Activated CD4-positive, alpha-beta T cell treated with anti-CD3 and anti-CD28 coated beads for 36 hours (primary cell): ENCODE measurements at regions of chr1 and their contacts with region 1.

Region 1: GRCh38 chr1:171188388-171189266 is 3.5 kb downstream of the FMO2 start:
- DNase-seq: peak; percentile 64
- ATAC-seq: peak; percentile 69
- H3K4me3 Mint-ChIP-seq: no peak overlapping the region
- H3K27ac Mint-ChIP-seq: no peak overlapping the region
- H3K4me1 Mint-ChIP-seq: no peaks in the 10 kb centered on the region
- H3K27me3 Mint-ChIP-seq: peaks cover 16% of the 10 kb centered on the region

Region 2: GRCh38 chr1:169933984-169934725 is 1254.5 kb before region 1 on chr1:
- CTCF ChIA-PET with region 1: no interaction called
- POLR2A ChIA-PET with region 1: no interaction called
- intact Hi-C with region 1: loop called in 1 of 2 experiments (anchors 2 kb)
- DNase-seq: no peak
- ATAC-seq: no peak
- H3K4me3 Mint-ChIP-seq: no peak overlapping the region
- H3K27ac Mint-ChIP-seq: no peak overlapping the region
- H3K4me1 Mint-ChIP-seq: no peaks in the 10 kb centered on the region
- H3K27me3 Mint-ChIP-seq: no peaks in the 10 kb centered on the region

Region 3: GRCh38 chr1:170967042-170967910 is 221.4 kb before region 1 on chr1:
- CTCF ChIA-PET with region 1: interaction called, 19 read pairs
- POLR2A ChIA-PET with region 1: no interaction called
- intact Hi-C with region 1: loop called in 1 of 2 experiments (anchors 2 kb)
- DNase-seq: peak; percentile 4
- ATAC-seq: no peak
- H3K4me3 Mint-ChIP-seq: no peak overlapping the region
- H3K27ac Mint-ChIP-seq: no peak overlapping the region
- H3K4me1 Mint-ChIP-seq: no peaks in the 10 kb centered on the region
- H3K27me3 Mint-ChIP-seq: peaks cover 22% of the 10 kb centered on the region

Region 4: DNA sequence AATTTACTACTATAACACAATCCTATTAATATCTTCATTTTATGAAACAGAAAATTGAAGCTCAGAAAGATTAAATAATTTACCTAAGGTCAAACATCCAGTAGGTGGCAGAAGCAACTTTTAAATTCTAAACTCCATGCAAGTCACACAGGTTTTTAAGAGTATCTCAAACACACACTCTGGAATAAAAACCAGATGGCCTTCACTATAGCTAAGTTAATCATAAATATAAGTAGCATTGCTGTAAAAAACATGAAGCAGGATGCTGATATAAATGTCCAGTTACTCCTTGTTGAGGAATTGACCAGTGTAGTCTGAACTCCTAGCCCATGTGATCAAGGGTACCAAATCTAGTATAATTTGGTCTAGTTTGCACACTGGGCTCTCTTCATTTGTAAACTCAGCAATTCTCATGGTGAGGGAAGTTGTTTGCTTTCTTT is 107.3 kb before region 1 on chr1:
- CTCF ChIA-PET with region 1: no interaction called
- POLR2A ChIA-PET with region 1: no interaction called
- intact Hi-C with region 1: loop called in 1 of 2 experiments (anchors 2 kb)
- DNase-seq: no peak
- ATAC-seq: no peak
- H3K4me3 Mint-ChIP-seq: no peak overlapping the region
- H3K27ac Mint-ChIP-seq: no peak overlapping the region
- H3K4me1 Mint-ChIP-seq: no peaks in the 10 kb centered on the region
- H3K27me3 Mint-ChIP-seq: peaks cover 4% of the 10 kb centered on the region

Region 5: GRCh38 chr1:171166361-171166760 is 22.3 kb before region 1 on chr1:
- CTCF ChIA-PET with region 1: no interaction called
- POLR2A ChIA-PET with region 1: no interaction called
- intact Hi-C with region 1: no loop called
- DNase-seq: no peak
- ATAC-seq: no peak
- H3K4me3 Mint-ChIP-seq: no peak overlapping the region
- H3K27ac Mint-ChIP-seq: no peak overlapping the region
- H3K4me1 Mint-ChIP-seq: no peaks in the 10 kb centered on the region
- H3K27me3 Mint-ChIP-seq: peaks cover 18% of the 10 kb centered on the region

Region 6: GRCh38 chr1:171545523-171545922 is 356.9 kb after region 1 on chr1:
- CTCF ChIA-PET with region 1: no interaction called
- POLR2A ChIA-PET with region 1: no interaction called
- intact Hi-C with region 1: no loop called
- DNase-seq: no peak
- ATAC-seq: no peak
- H3K4me3 Mint-ChIP-seq: no peak overlapping the region
- H3K27ac Mint-ChIP-seq: no peak overlapping the region
- H3K4me1 Mint-ChIP-seq: peaks cover 6% of the 10 kb centered on the region
- H3K27me3 Mint-ChIP-seq: no peaks in the 10 kb centered on the region

Region 7: DNA sequence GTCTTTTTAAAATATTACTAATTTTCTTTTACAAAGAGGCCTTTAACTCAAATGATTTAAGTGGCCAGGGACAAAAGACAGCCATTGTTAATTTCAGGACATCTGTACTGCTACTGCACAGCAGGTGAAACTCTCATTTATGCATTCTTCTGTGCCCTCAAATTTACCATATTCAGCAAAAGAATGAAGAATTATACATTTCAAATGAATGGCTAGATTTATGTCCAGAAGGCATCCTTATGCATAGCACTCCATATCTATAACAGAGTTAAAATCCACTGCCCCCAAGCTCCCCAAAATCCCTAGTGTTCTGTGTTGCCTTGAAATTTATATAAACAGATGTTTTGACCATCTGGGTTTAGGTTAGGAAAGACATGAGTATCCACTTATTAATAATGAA is 855.3 kb after region 1 on chr1:
- CTCF ChIA-PET with region 1: no interaction called
- POLR2A ChIA-PET with region 1: no interaction called
- intact Hi-C with region 1: no loop called
- DNase-seq: no peak
- ATAC-seq: no peak
- H3K4me3 Mint-ChIP-seq: no peak overlapping the region
- H3K27ac Mint-ChIP-seq: no peak overlapping the region
- H3K4me1 Mint-ChIP-seq: peaks cover 13% of the 10 kb centered on the region
- H3K27me3 Mint-ChIP-seq: no peaks in the 10 kb centered on the region

Region 8: DNA sequence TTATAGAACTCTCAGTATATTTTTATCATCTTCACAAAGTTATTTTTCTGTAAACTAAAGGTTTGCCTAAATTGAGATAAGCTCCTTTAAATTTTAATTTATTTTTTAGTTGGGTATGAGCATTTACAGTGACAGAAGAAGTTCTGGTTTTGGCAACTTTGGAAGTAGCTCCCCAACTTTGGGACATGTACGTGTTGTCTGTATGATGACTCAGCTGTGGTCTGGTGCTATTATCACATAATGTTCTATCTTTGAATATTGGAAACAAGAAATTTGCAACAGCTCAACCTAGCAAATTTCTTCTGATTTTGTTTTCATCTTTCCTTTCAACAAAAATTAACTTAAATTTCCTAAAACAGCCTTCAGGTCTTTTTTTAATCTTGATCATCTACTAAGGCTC is 1185.2 kb after region 1 on chr1:
- CTCF ChIA-PET with region 1: no interaction called
- POLR2A ChIA-PET with region 1: no interaction called
- intact Hi-C with region 1: no loop called
- DNase-seq: no peak
- ATAC-seq: no peak
- H3K4me3 Mint-ChIP-seq: no peak overlapping the region
- H3K27ac Mint-ChIP-seq: no peak overlapping the region
- H3K4me1 Mint-ChIP-seq: peaks cover 16% of the 10 kb centered on the region
- H3K27me3 Mint-ChIP-seq: no peaks in the 10 kb centered on the region